ENCODE measurements at regions of chr4 and their contacts with region 1.

Region 1: GRCh38 chr4:24488399-24489164 is 95.8 kb downstream of the DHX15 start:
- DNase-seq: peak; percentile 87
- H3K4me3 ChIP-seq: no peak overlapping the region
- H3K27ac ChIP-seq: no peak overlapping the region
- H3K4me1 ChIP-seq: peaks cover 0 to 4% (median 0%) of the 10 kb centered on the region in 4 donors
- H3K27me3 ChIP-seq: no peaks in the 10 kb centered on the region
- CTCF ChIP-seq: peak in 5 of 7 experiments; percentile 63 to 87 (median 84)
- EP300 ChIP-seq: no peak
- POLR2A ChIP-seq: no peak

Region 2: DNA sequence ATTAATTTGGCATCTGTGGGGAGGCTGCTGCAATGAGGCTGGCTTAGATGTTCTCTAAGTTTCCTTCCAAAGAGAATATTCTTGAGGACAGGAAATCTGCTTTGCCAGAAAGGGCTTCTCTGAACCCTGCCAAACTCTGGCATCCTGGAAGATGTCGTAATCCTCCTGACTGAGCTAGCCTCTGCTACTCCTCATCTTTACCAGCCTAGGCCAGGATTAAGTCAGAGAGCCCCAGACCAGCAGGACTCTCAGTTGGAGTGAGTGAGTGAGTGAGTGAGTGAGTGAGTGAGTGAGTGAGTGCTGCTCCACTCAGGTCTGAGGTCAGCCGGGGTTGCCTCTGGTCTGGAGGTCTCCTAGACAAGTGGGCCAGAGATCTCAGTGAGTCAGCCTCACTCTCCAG is 201.9 kb after region 1 on chr4:
- intact Hi-C with region 1: loop called (anchors 5 kb)
- DNase-seq: no peak
- H3K4me3 ChIP-seq: no peak overlapping the region
- H3K27ac ChIP-seq: no peak overlapping the region
- H3K4me1 ChIP-seq: peaks cover 0 to 11% (median 0%) of the 10 kb centered on the region in 4 donors
- H3K27me3 ChIP-seq: no peaks in the 10 kb centered on the region
- CTCF ChIP-seq: no peak
- EP300 ChIP-seq: no peak
- POLR2A ChIP-seq: no peak

Region 3: DNA sequence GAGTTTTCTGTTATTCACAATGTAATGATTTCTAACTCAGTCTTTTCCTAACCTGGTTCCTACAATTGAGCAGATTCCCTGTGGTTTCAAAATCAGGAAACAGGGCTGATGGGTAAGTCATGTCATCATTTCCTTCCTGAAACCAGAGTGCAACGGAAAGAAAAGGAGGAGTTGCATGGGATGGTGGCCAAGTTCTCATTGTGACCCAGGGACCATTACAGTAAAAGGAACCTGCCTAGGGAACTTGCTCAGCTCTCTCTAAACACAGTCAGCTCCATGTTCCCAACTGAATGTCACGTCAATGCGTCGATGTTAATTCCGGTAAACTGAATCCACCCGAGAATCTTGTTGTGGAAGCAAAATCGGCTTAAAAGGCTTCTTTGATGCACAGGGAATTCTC is 491.0 kb after region 1 on chr4:
- intact Hi-C with region 1: loop called (anchors 10 kb)
- DNase-seq: peak in 1 of 2 donors; percentile 69
- H3K4me3 ChIP-seq: peak overlapping the region in 2 of 4 donors; percentile 11 to 23
- H3K27ac ChIP-seq: peak overlapping the region in 4 of 5 donors; percentile 54 to 80 (median 65)
- H3K4me1 ChIP-seq: peaks cover 0 to 10% (median 2%) of the 10 kb centered on the region in 4 donors
- H3K27me3 ChIP-seq: no peaks in the 10 kb centered on the region
- CTCF ChIP-seq: no peak
- EP300 ChIP-seq: peak; percentile 8
- POLR2A ChIP-seq: no peak